ENCODE measurements at regions of chr4 and their contacts with region 1.

Region 1: GRCh38 chr4:76067652-76068286 is 6.7 kb upstream of the ART3 start:
- DNase-seq: peak; percentile 52 to 61
- ATAC-seq: peak; percentile 88 to 92; a peak in 5 of 6 replicates
- H3K4me3 ChIP-seq: no peak overlapping the region
- H3K27ac ChIP-seq: no peak overlapping the region
- H3K4me1 ChIP-seq: no peaks in the 10 kb centered on the region
- CTCF ChIP-seq: peak; percentile 76
- EP300 ChIP-seq: no peak
- POLR2A ChIP-seq: no peak
- RAD21 ChIP-seq: peak; percentile 76 to 80

Region 2: GRCh38 chr4:76055016-76055415 is 12.8 kb before region 1 on chr4:
- CTCF ChIA-PET with region 1: interaction called, 10 read pairs
- POLR2A ChIA-PET with region 1: no interaction called
- DNase-seq: no peak
- ATAC-seq: no peak
- H3K4me3 ChIP-seq: no peak overlapping the region
- H3K27ac ChIP-seq: no peak overlapping the region
- H3K4me1 ChIP-seq: no peaks in the 10 kb centered on the region
- CTCF ChIP-seq: no peak
- EP300 ChIP-seq: no peak
- POLR2A ChIP-seq: no peak
- RAD21 ChIP-seq: no peak

Region 3: DNA sequence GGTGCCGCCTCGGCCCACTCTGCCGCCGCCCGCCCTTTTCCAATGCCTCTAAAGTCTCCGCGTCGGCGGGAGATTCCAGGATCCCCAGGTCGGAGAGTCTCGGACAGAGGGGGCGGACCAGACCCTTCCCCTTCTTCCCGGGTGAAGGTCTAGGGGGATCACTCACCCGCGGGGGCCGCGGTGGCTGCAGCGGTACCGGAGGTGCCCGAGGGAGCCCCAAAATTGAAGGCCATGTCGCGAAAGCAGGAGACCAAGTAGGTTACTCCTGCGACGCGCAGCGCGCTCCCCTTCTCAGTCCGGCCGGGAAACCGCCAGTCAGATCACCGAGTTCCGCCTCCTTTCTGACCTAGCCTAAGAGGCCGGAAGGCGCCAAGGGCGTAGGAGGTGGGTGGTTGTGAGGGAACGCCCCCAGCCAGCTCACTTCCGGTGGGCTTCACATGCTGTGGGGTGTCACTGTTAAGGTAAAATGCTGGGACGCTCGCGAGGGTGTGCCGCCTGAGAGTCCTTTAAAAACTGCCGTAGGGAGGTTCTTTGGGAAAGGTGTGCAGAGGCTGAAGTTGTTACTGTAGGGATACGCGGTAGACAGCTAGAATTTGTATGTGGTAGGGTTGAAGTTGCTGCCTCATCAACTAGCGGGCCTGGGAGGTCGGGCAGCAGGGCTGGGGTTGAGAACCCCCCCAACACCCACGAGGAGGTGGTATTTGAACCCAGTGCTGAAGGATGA is 80.5 kb after region 1 on chr4 and contains the start of gene NUP54:
- CTCF ChIA-PET with region 1: no interaction called
- POLR2A ChIA-PET with region 1: no interaction called
- DNase-seq: peak; percentile 85 to 94
- ATAC-seq: peak; percentile 96 to 98
- H3K4me3 ChIP-seq: peak within 1 kb of the TSS; percentile 71
- H3K27ac ChIP-seq: peak within 1 kb of the TSS; percentile 97
- H3K4me1 ChIP-seq: peaks cover 20% of the 10 kb centered on the region; the same call in 2 of the 3 replicates
- CTCF ChIP-seq: no peak
- EP300 ChIP-seq: no peak
- POLR2A ChIP-seq: peak; percentile 70
- RAD21 ChIP-seq: no peak
- polyA plus RNA-seq, gene NUP54: 34.0 and 43.2 TPM in 2 replicates

Measured in A549 (cell line).